Activated CD8-positive, alpha-beta T cell treated with anti-CD3 and anti-CD28 coated beads for 36 hours (primary cell): ENCODE measurements at regions of chr2 and their contacts with region 1.

Region 1: GRCh38 chr2:85813982-85814801 is 60.4 kb downstream of the ATOH8 start:
- DNase-seq: peak; percentile 91
- ATAC-seq: peak; percentile 98
- H3K4me3 Mint-ChIP-seq: no peak overlapping the region
- H3K27ac Mint-ChIP-seq: no peak overlapping the region
- H3K4me1 Mint-ChIP-seq: no peaks in the 10 kb centered on the region
- H3K27me3 Mint-ChIP-seq: peaks cover 9% of the 10 kb centered on the region
- CTCF ChIP-seq: peak; percentile 89

Region 2: DNA sequence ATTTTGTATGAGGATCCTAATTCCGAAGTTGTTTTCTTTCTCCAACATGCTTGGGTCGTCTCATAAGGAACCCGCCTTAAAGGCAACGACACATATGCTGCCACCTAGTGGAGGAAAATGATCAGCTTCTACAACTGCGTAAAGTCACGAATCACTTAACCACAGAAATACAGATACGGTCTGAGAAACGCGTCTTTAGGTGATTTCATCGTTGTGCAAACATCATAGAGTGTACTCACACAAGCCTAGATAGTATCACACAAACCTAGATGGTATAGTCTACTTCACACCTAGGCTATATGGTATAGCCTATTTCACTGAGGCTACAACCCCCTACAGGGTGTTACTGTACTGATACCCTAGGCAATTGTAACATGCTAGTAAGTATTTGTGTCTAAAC is 106.9 kb before region 1 on chr2:
- CTCF ChIA-PET with region 1: interaction called, 29 read pairs
- POLR2A ChIA-PET with region 1: no interaction called
- intact Hi-C with region 1: no loop called
- DNase-seq: peak; percentile 82
- ATAC-seq: peak; percentile 91
- H3K4me3 Mint-ChIP-seq: no peak overlapping the region
- H3K27ac Mint-ChIP-seq: no peak overlapping the region
- H3K4me1 Mint-ChIP-seq: peaks cover 24% of the 10 kb centered on the region
- H3K27me3 Mint-ChIP-seq: peaks cover 3% of the 10 kb centered on the region
- CTCF ChIP-seq: peak; percentile 79

Region 3: DNA sequence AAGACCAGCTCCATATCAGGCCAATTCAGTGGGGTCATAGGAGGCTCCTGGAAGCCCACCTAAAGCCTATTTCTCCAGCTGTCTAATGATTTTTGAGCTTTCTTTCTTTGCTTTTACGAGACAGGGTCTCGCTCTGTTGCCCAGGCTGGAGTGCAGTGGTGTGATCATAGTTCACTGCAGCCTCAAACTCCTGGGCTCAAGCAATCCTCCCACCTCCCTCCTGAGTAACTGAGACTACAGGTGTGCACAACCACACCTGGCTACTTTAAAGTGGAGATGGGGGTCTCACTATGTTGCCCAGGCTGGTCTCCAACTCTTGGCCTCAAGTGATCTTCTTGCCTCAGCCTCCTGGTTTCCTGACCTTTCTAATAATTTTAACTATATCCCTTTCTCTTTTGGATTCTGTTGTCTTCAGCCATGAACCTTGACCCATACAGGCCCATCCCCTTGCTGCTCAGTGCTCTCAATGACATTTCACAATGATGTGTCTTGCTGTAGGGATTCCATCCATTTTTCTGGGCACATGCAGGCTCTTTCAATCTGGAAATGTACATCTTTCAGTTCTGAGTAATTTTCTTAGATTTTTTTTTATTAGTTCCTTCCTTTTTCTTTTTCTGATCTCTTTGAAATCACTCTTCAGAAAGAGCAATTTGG is 90.4 kb before region 1 on chr2:
- CTCF ChIA-PET with region 1: interaction called, 117 read pairs
- POLR2A ChIA-PET with region 1: interaction called, 4 read pairs
- intact Hi-C with region 1: loop called (anchors 5 kb)
- DNase-seq: no peak
- ATAC-seq: no peak
- H3K4me3 Mint-ChIP-seq: no peak overlapping the region
- H3K27ac Mint-ChIP-seq: no peak overlapping the region
- H3K4me1 Mint-ChIP-seq: no peaks in the 10 kb centered on the region
- H3K27me3 Mint-ChIP-seq: peaks cover 6% of the 10 kb centered on the region
- CTCF ChIP-seq: no peak

Region 4: GRCh38 chr2:85734942-85735608 is 79.1 kb before region 1 on chr2:
- CTCF ChIA-PET with region 1: interaction called, 117 read pairs
- POLR2A ChIA-PET with region 1: no interaction called
- intact Hi-C with region 1: no loop called
- DNase-seq: no peak
- ATAC-seq: no peak
- H3K4me3 Mint-ChIP-seq: no peak overlapping the region
- H3K27ac Mint-ChIP-seq: no peak overlapping the region
- H3K4me1 Mint-ChIP-seq: no peaks in the 10 kb centered on the region
- H3K27me3 Mint-ChIP-seq: peaks cover 2% of the 10 kb centered on the region
- CTCF ChIP-seq: no peak

Region 5: DNA sequence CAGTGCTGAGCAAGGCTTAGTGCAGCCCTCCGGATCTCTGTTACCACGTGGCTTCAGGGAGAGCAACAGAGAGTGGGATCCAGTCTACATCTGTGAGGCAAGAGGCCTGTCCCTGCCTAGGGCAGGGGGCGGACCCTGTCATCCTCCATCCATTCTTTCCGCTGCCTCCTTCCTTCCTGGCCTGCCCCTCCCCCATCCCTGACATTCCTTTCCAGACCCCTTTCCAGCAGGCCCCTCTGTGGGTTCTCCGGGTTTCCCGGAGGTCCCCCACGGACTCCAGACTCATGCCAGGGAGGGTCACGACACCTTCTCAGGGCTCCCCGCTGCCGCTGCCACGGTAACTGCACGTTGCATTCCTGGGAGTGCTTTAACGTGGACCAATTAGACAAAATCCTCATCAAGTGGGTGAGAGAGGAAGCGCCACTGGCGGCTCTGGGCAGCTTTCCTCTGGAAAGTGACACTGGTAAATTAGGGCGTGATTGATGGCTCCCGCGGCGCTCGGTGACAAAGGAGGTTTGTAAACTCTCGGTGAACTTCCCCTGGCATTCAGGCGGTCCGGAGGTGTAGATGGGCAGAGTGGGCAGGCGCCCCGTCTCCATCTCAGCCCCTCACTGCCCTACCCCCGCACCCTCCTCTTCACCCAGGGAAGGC is 49.0 kb before region 1 on chr2:
- CTCF ChIA-PET with region 1: interaction called, 20 read pairs
- POLR2A ChIA-PET with region 1: no interaction called
- intact Hi-C with region 1: no loop called
- DNase-seq: no peak
- ATAC-seq: no peak
- H3K4me3 Mint-ChIP-seq: no peak overlapping the region
- H3K27ac Mint-ChIP-seq: no peak overlapping the region
- H3K4me1 Mint-ChIP-seq: no peaks in the 10 kb centered on the region
- H3K27me3 Mint-ChIP-seq: peaks cover 27% of the 10 kb centered on the region
- CTCF ChIP-seq: no peak

Region 6: GRCh38 chr2:86054535-86055082 is 240.4 kb after region 1 on chr2:
- CTCF ChIA-PET with region 1: no interaction called
- POLR2A ChIA-PET with region 1: no interaction called
- intact Hi-C with region 1: no loop called
- DNase-seq: no peak
- ATAC-seq: no peak
- H3K4me3 Mint-ChIP-seq: no peak overlapping the region
- H3K27ac Mint-ChIP-seq: no peak overlapping the region
- H3K4me1 Mint-ChIP-seq: no peaks in the 10 kb centered on the region
- H3K27me3 Mint-ChIP-seq: no peaks in the 10 kb centered on the region
- CTCF ChIP-seq: no peak

Region 7: GRCh38 chr2:86097114-86097896 is 283.1 kb after region 1 on chr2:
- CTCF ChIA-PET with region 1: no interaction called
- POLR2A ChIA-PET with region 1: no interaction called
- intact Hi-C with region 1: no loop called
- DNase-seq: no peak
- ATAC-seq: no peak
- H3K4me3 Mint-ChIP-seq: no peak overlapping the region
- H3K27ac Mint-ChIP-seq: no peak overlapping the region
- H3K4me1 Mint-ChIP-seq: peaks cover 30% of the 10 kb centered on the region
- H3K27me3 Mint-ChIP-seq: no peaks in the 10 kb centered on the region
- CTCF ChIP-seq: no peak